Panc1 (cell line): ENCODE measurements at regions of chr14 and their contacts with region 1.

Region 1: GRCh38 chr14:35268946-35269345 is 23.2 kb upstream of the PSMA6 start:
- DNase-seq: no peak
- ATAC-seq: no peak
- H3K4me3 ChIP-seq: no peak overlapping the region
- H3K27ac ChIP-seq: no peak overlapping the region
- H3K4me1 ChIP-seq: no peaks in the 10 kb centered on the region
- H3K27me3 ChIP-seq: no peaks in the 10 kb centered on the region
- CTCF ChIP-seq: no peak

Region 2: DNA sequence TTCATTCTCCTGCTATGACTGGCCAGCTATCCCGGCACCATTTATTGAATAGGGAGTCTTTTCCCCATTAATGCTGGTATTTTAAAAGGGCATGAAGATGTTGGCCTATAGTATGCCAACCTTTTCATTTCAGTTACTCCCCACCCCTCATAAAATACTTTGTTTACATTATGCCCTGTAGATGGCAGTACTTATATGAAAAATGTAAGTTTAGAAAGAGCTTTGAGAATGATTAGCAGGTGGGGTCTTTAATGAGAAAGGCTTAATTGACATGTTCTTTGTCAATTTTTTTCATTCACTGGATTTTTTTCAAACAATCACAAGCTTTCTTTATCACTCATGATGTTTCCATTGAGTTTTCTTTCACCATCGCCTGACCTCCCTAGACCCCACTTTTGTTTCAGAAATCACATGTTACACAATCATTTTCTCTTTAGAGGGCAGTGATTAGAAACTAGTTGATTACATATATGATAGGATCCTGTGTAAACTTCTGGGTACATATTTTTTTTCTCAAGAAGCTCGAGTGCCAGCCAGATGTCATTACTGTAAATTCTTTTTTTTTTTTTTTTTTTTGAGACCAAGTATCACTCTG is 39.4 kb before region 1 on chr14:
- CTCF ChIA-PET with region 1: no interaction called
- POLR2A ChIA-PET with region 1: no interaction called
- in situ Hi-C with region 1: no loop called
- intact Hi-C with region 1: no loop called
- DNase-seq: no peak
- ATAC-seq: no peak
- H3K4me3 ChIP-seq: no peak overlapping the region
- H3K27ac ChIP-seq: no peak overlapping the region
- H3K4me1 ChIP-seq: no peaks in the 10 kb centered on the region
- H3K27me3 ChIP-seq: no peaks in the 10 kb centered on the region
- CTCF ChIP-seq: peak; percentile 23; the same call in 1 of the 2 replicates

Region 3: GRCh38 chr14:35300228-35300627 is 31.3 kb after region 1 on chr14:
- CTCF ChIA-PET with region 1: no interaction called
- POLR2A ChIA-PET with region 1: interaction called, 12 read pairs
- in situ Hi-C with region 1: no loop called
- intact Hi-C with region 1: no loop called
- DNase-seq: no peak
- ATAC-seq: no peak
- H3K4me3 ChIP-seq: no peak overlapping the region
- H3K27ac ChIP-seq: no peak overlapping the region
- H3K4me1 ChIP-seq: peaks cover 6% of the 10 kb centered on the region; the same call in 1 of the 2 replicates
- H3K27me3 ChIP-seq: no peaks in the 10 kb centered on the region
- CTCF ChIP-seq: no peak